Ovary (tissue), 10 donors: ENCODE measurements at regions of chr9 and their contacts with region 1.

Region 1: DNA sequence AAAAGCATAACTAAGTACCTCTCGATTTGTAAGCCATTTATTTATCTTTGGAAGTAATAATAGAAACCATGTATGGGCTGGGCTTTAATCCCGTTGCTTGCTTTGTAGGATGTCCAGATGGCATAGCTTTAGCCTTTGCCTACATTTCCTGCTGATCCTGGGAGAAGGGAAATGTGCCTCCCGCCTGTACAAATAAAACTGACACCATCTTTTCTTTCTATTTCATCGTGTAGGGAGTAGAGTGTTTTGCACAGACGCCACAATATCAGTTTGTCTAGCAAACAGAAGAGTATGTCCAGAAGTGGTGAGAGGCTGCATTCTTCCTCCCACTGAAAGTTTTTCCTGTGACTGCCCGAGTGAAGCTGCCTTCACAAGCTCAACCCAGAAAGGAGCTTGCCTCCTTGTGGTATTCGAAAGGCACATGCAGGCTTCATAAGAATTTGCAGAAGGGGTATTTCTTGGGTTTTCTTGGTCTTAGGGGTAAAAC is 24.7 kb upstream of the TJP2 start:
- DNase-seq: peak in 1 of 5 donors; percentile 23
- H3K4me3 ChIP-seq: no peak overlapping the region
- H3K27ac ChIP-seq: peak overlapping the region in 1 of 2 donors; percentile 17
- H3K4me1 ChIP-seq: peaks cover 2% of the 10 kb centered on the region
- H3K27me3 ChIP-seq: no peaks in the 10 kb centered on the region
- CTCF ChIP-seq: no peak
- EP300 ChIP-seq: no peak
- POLR2A ChIP-seq: no peak

Region 2: GRCh38 chr9:69056191-69056815 is 93.1 kb before region 1 on chr9:
- intact Hi-C with region 1: loop called in 1 of 4 experiments (anchors 10 kb)
- DNase-seq: no peak
- H3K4me3 ChIP-seq: no peak overlapping the region
- H3K27ac ChIP-seq: no peak overlapping the region
- H3K4me1 ChIP-seq: no peaks in the 10 kb centered on the region
- H3K27me3 ChIP-seq: no peaks in the 10 kb centered on the region
- CTCF ChIP-seq: no peak
- EP300 ChIP-seq: no peak
- POLR2A ChIP-seq: no peak

Region 3: DNA sequence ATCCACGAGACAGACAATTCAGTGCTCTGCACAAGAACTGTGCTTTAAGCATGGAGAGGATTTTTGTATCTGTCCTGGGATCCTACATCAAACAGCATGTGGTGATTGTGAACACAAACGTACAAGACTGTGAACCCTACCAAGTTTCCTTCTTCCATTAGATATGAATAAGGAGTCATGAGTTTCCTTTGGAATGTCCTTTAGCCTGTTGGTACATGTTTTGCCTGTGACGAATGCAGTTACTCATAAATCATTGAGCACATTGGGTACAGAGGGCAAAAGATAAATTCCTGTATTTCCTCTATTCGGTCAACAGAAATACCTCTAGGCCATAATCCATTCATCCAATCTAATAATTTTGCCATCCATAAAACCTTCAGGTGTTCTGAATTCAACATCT is 52.3 kb before region 1 on chr9:
- intact Hi-C with region 1: no loop called
- DNase-seq: no peak
- H3K4me3 ChIP-seq: no peak overlapping the region
- H3K27ac ChIP-seq: no peak overlapping the region
- H3K4me1 ChIP-seq: no peaks in the 10 kb centered on the region
- H3K27me3 ChIP-seq: no peaks in the 10 kb centered on the region
- CTCF ChIP-seq: no peak
- EP300 ChIP-seq: no peak
- POLR2A ChIP-seq: no peak